ENCODE measurements at regions of chr9 and their contacts with region 1.

Region 1: GRCh38 chr9:36487482-36488388 is 85.0 kb upstream of the MELK start:
- DNase-seq: peak; percentile 89
- ATAC-seq: peak; percentile 94
- H3K4me3 Mint-ChIP-seq: peak overlapping the region; percentile 96
- H3K27ac Mint-ChIP-seq: peak overlapping the region; percentile 99
- H3K4me1 Mint-ChIP-seq: peaks cover 58% of the 10 kb centered on the region
- H3K27me3 Mint-ChIP-seq: no peaks in the 10 kb centered on the region
- CTCF ChIP-seq: no peak

Region 2: GRCh38 chr9:36461323-36461722 is 26.4 kb before region 1 on chr9:
- CTCF ChIA-PET with region 1: interaction called, 3 read pairs
- POLR2A ChIA-PET with region 1: interaction called, 10 read pairs
- intact Hi-C with region 1: loop called (anchors 5 kb)
- DNase-seq: no peak
- ATAC-seq: no peak
- H3K4me3 Mint-ChIP-seq: no peak overlapping the region
- H3K27ac Mint-ChIP-seq: peak overlapping the region; percentile 47
- H3K4me1 Mint-ChIP-seq: peaks cover 50% of the 10 kb centered on the region
- H3K27me3 Mint-ChIP-seq: no peaks in the 10 kb centered on the region
- CTCF ChIP-seq: no peak

Region 3: GRCh38 chr9:36470643-36471290 is 17.0 kb before region 1 on chr9:
- CTCF ChIA-PET with region 1: interaction called, 5 read pairs
- POLR2A ChIA-PET with region 1: interaction called, 36 read pairs
- intact Hi-C with region 1: no loop called
- DNase-seq: peak; percentile 84
- ATAC-seq: peak; percentile 99
- H3K4me3 Mint-ChIP-seq: peak overlapping the region; percentile 71
- H3K27ac Mint-ChIP-seq: peak overlapping the region; percentile 91
- H3K4me1 Mint-ChIP-seq: peaks cover 39% of the 10 kb centered on the region
- H3K27me3 Mint-ChIP-seq: no peaks in the 10 kb centered on the region
- CTCF ChIP-seq: no peak

Region 4: DNA sequence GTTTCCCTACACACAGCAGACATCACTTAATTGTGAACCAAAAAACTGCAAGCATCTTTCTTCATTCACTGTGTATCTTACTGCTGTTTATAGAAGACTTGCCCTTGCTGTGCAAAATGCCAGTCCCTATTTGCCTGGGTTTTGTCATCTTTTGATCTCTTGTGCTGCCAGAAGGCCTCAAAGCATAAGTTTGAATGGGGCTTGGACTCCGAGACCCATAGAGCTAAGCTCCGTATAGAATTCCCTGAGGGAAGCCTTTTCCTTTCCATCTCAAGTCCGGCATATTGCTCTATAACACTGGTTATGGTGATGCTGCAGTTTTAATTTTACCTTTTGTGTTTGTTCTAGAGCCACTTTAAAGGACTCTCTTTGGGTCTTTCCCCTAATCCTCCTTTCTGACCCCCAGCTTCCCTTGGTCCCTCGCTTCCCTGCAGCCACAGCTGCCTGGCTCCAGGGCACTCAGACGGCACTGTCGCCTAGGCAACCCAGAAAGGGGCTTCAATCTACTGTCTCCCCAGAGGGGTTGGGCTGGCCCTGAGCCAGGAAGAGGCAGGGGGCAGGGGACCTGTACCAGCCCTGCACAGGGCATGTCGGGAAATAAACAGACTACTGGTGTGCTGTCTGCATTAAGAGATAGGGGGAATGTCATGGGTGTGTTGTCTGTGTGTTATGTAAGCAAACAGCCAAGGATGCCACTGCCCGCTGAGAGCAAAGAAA is 11.6 kb after region 1 on chr9:
- CTCF ChIA-PET with region 1: no interaction called
- POLR2A ChIA-PET with region 1: interaction called, 10 read pairs
- intact Hi-C with region 1: no loop called
- DNase-seq: no peak
- ATAC-seq: no peak
- H3K4me3 Mint-ChIP-seq: no peak overlapping the region
- H3K27ac Mint-ChIP-seq: no peak overlapping the region
- H3K4me1 Mint-ChIP-seq: peaks cover 29% of the 10 kb centered on the region
- H3K27me3 Mint-ChIP-seq: no peaks in the 10 kb centered on the region
- CTCF ChIP-seq: no peak

Region 5: GRCh38 chr9:36625006-36625615 is 137.4 kb after region 1 on chr9:
- CTCF ChIA-PET with region 1: no interaction called
- POLR2A ChIA-PET with region 1: no interaction called
- intact Hi-C with region 1: no loop called
- DNase-seq: no peak
- ATAC-seq: no peak
- H3K4me3 Mint-ChIP-seq: no peak overlapping the region
- H3K27ac Mint-ChIP-seq: no peak overlapping the region
- H3K4me1 Mint-ChIP-seq: no peaks in the 10 kb centered on the region
- H3K27me3 Mint-ChIP-seq: no peaks in the 10 kb centered on the region
- CTCF ChIP-seq: no peak